Brain microvascular endothelial cell (primary cell): ENCODE measurements at regions of chr10 and their contacts with region 1.

Region 1: GRCh38 chr10:100878291-100878910 is 34.4 kb upstream of the SLF2 start:
- DNase-seq: peak; percentile 71
- H3K4me3 ChIP-seq: no peak overlapping the region
- H3K27ac ChIP-seq: no peak overlapping the region
- H3K27me3 ChIP-seq: no peaks in the 10 kb centered on the region
- CTCF ChIP-seq: peak; percentile 87

Region 2: GRCh38 chr10:100535715-100536353 is 342.6 kb before region 1 on chr10 and contains the start of gene HIF1AN:
- in situ Hi-C with region 1: loop called (anchors 25 kb)
- DNase-seq: peak; percentile 95
- H3K4me3 ChIP-seq: peak within 1 kb of the TSS; percentile 71
- H3K27ac ChIP-seq: peak within 1 kb of the TSS; percentile 57
- H3K27me3 ChIP-seq: no peaks in the 10 kb centered on the region
- CTCF ChIP-seq: peak; percentile 98

Region 3: DNA sequence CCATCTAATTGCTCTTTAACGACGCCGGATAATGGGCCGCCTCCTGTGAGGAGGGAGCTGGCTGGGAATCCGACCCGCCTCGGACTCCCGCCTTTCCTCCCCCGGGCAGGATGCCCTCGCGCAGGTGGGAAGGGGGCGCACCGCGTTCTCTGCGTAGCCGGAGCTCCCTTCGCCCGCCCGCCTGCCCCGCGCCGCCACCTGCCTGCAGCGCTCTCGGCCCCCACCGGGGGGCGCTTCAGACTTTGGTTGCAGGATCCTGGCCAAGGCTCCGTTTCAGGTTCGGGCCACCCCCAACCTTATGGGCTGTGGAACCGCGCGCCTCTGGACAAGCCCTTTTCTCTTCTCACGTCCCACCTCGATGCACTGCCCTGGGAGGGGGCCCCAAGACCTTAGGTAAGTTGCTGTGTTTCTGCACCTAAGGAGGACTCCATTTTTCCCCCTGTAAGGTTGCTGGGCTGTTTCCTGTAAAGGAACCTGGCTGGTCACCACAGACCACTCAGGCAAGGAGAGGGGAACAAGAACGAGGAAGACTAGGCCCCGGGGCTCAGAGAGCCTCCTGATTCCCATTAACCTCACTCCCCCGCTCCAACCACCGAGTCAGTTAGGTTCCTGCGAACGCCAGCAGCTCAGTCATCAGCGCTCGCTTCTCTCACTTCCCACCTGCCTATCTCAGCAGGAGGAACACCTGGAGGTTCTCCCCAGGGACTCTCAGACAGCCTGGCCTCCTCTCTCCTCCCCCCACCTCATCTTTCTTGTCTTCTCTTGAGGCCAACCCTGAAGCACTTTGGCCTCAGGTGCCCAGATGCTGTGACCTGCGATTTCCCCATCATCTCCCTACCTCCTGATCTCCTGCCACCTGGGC is 172.0 kb after region 1 on chr10:
- in situ Hi-C with region 1: no loop called
- DNase-seq: peak; percentile 33
- H3K4me3 ChIP-seq: no peak overlapping the region
- H3K27ac ChIP-seq: no peak overlapping the region
- H3K27me3 ChIP-seq: peaks cover 28% of the 10 kb centered on the region
- CTCF ChIP-seq: peak; percentile 75